Left cardiac atrium (tissue), 4 donors: ENCODE measurements at regions of chr9 and their contacts with region 1.

Region 1: GRCh38 chr9:108565651-108566378 is 290.0 kb downstream of the ACTL7B start:
- DNase-seq: peak; percentile 36
- ATAC-seq: peak; percentile 95 to 96

Region 2: DNA sequence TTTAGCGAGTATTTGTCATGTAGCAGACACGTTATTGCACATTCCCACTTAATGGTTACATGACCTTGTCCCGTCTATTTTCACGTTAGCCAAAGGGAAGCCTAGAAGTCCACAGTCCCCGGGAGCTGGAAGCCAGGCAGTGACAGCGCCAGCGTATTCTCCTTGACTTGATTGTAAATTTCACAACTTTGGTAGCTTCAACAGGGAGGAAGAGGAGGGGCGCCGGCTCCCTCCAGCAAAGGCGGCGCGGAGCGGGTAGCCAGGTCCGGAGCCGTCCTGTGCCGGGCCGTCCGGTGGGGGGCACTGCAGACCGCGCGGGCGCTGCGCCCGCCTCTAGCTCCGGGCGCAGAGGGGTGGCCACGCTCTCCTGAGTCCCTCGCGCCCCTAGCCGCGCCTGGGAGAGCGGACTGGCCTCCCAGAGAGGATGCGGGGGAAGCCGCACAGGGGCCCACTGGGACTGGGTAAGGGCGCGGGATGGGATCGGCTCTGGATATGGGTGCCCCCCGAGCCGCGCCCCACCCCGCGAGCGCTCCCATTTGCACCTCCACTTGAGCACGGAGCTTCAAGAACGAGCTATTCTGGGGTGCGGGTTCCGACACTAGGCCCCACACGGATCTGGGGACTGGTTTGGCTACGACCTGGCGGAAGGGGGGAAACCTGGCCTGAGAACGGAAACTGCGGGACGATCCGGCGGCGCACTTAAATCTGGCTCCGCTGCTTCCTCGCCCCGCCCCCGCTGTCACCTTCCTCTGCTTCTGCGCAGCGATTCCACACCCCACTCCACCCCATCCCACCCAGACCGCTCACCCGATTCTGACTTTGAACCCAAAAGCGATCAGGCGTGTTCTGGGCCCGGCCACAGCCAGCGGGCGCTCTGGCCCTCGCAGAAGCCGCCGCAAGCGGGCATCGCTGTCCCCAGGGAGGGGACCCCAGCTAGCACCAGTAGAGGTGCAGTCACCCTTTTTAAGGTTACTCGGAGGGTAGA is 1100.1 kb before region 1 on chr9:
- intact Hi-C with region 1: loop called in 1 of 2 experiments (anchors 5 kb)
- DNase-seq: peak; percentile 86
- ATAC-seq: peak; percentile 98 to 100

Region 3: GRCh38 chr9:107484117-107484723 is 1081.6 kb before region 1 on chr9:
- intact Hi-C with region 1: loop called (anchors 5 kb)
- DNase-seq: no peak
- ATAC-seq: peak; percentile 35 to 56

Region 4: DNA sequence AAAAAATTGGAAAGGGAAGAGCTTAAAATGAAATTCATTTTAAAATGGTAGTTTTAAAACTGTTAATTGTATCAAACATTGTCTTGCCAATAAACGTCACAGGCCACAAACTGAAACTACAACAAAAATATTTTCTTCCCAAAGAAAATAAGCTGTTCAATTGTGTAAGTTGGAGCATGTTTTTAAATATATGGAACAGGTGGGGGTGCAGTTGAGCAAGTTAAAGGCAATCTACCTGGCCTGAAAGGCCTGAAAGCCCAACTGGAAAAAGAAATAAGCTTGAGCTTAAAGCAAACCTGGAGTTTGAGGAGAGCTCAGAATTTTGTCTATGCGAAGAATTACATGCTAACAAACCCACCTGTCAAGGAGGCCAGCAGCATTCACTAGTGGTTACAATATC is 149.5 kb before region 1 on chr9:
- intact Hi-C with region 1: loop called in 1 of 2 experiments (anchors 5 kb)
- DNase-seq: no peak
- ATAC-seq: no peak

Region 5: GRCh38 chr9:108761655-108762347 is 196.0 kb after region 1 on chr9:
- intact Hi-C with region 1: loop called in 1 of 2 experiments (anchors 10 kb)
- DNase-seq: peak; percentile 67
- ATAC-seq: peak; percentile 84 to 89